Activated T-helper 2 cell treated with anti-CD3 and anti-CD28 coated beads, Interferon-gamma antibody, Interleukin-2, Interleukin-4, amounts not matched to agents 10 μg/mL and 5 μg/mL and 100 μg/mL, durations not matched to agents 14 hours and 24 hours and 36 hours (primary cell): ENCODE measurements at regions of chr5 and their contacts with region 1.

Region 1: DNA sequence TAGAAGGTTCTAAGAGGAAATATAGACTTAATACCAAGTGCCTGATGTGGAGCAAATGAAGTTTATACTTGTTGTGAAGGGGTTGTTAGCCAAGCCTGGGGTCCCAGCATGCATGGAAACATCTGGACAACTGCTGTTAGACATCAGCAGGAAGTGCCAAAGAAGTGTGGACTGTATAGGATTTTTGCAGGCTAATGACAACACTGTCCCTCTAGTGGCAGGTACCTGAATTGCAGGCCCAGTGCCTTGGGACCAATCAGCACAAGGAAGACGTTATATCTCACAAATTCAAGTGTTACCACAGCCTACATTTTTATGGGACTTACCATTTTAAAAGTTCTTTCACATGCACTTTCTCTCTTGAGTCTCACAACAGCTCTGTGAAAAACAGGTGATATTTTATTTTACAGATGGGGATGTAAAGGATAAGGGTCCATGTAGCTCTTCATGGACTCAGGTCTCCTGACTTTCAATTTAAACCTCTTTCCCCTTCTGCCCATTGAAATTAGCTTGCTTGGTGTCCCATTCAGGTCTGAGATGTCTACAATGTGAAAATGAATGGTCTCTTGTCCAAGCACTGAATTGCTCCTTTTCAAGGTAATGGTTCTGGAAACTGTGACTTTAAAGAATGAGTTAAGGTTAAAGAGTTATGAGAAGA is 89.0 kb upstream of the MAP1B start:
- DNase-seq: peak; percentile 33
- H3K4me3 Mint-ChIP-seq: no peak overlapping the region
- H3K27ac Mint-ChIP-seq: no peak overlapping the region
- H3K4me1 Mint-ChIP-seq: no peaks in the 10 kb centered on the region
- H3K27me3 Mint-ChIP-seq: peaks cover 12% of the 10 kb centered on the region

Region 2: GRCh38 chr5:71782771-71783770 is 235.2 kb before region 1 on chr5:
- intact Hi-C with region 1: loop called (anchors 2 kb)
- DNase-seq: no peak
- H3K4me3 Mint-ChIP-seq: peak overlapping the region; percentile 23
- H3K27ac Mint-ChIP-seq: no peak overlapping the region
- H3K4me1 Mint-ChIP-seq: peaks cover 15% of the 10 kb centered on the region
- H3K27me3 Mint-ChIP-seq: peaks cover 4% of the 10 kb centered on the region